SK-N-SH (cell line): ENCODE measurements at regions of chr10 and their contacts with region 1.

Region 1: GRCh38 chr10:72834183-72834825 is 59.2 kb upstream of the OIT3 start:
- DNase-seq: peak; percentile 57
- H3K4me3 ChIP-seq: no peak overlapping the region
- H3K27ac ChIP-seq: no peak overlapping the region
- H3K4me1 ChIP-seq: peaks cover 0 to 7% of the 10 kb centered on the region in 2 experiments; a peak in 2 of 4 replicates
- H3K27me3 ChIP-seq: no peaks in the 10 kb centered on the region
- CTCF ChIP-seq: peak; percentile 83
- EP300 ChIP-seq: no peak
- RAD21 ChIP-seq: peak; percentile 97

Region 2: DNA sequence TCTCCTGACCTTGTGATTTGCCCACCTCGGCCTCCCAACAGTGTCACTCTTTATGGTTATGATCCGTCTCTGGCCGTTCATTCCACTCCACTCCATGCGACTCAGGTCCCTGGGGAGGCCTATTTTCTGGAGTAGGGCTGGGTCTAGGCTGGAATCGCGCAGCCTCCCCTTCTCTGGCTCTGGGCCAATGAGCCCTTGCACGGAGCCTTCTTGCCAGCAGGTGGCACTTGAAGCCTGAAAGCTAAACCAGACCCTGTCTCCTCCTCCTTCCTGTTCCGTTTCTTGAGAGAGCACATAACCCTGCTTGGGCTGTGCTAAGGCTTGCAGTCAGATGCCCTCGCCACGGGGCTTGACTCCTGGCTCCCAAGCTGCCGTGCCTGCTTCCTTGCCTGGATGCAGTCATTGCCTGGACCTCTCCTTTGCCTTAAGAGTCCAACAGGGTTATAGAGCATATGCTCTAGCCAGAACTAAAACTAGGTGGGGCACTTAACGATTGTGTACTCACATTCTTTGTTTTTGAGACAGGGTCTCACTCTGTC is 470.0 kb before region 1 on chr10:
- CTCF ChIA-PET with region 1: interaction called, 90 read pairs
- POLR2A ChIA-PET with region 1: interaction called, 3 read pairs
- DNase-seq: peak; percentile 83
- H3K4me3 ChIP-seq: peak overlapping the region in 1 of 2 experiments; percentile 34; a peak in 1 of 4 replicates
- H3K27ac ChIP-seq: peak overlapping the region; percentile 25 to 62; a peak in 2 of 4 replicates
- H3K4me1 ChIP-seq: peaks cover 2 to 12% of the 10 kb centered on the region in 2 experiments; a peak in 1 of 4 replicates
- H3K27me3 ChIP-seq: no peaks in the 10 kb centered on the region
- CTCF ChIP-seq: peak; percentile 93
- EP300 ChIP-seq: no peak
- RAD21 ChIP-seq: peak; percentile 97

Region 3: GRCh38 chr10:72692057-72692910 is 142.0 kb before region 1 on chr10 and contains the start of gene MCU:
- CTCF ChIA-PET with region 1: interaction called, 38 read pairs
- POLR2A ChIA-PET with region 1: interaction called, 5 read pairs
- DNase-seq: peak; percentile 94
- H3K4me3 ChIP-seq: peak within 1 kb of the TSS; percentile 89
- H3K27ac ChIP-seq: peak within 1 kb of the TSS; percentile 20 to 80; a peak in 3 of 4 replicates
- H3K4me1 ChIP-seq: peaks cover 8 to 11% of the 10 kb centered on the region in 2 experiments; a peak in 3 of 4 replicates
- H3K27me3 ChIP-seq: no peaks in the 10 kb centered on the region
- CTCF ChIP-seq: no peak
- EP300 ChIP-seq: no peak
- RAD21 ChIP-seq: no peak
- polyA plus RNA-seq, gene MCU: 20.6 and 30.1 TPM in 2 replicates

Region 4: DNA sequence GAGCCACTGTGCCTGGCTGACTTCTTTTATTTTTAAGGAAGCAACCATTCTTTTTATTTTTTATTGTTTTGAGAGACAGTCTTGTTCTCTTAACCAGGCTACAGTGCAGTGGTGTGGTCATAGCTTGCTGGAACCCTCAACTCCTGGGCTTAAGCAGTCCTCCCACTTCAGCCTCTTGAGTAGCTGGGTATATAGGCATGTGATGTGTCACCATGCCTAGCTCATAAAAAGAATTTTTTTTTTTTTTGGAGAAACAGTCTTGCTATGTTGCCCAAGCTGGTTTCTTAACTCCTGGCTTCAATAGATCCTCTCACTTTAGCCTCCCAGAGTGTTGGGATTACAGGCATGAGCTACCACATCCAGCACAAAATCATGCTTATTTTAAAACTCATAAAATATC is 136.6 kb before region 1 on chr10:
- CTCF ChIA-PET with region 1: interaction called, 38 read pairs
- POLR2A ChIA-PET with region 1: interaction called, 4 read pairs
- DNase-seq: no peak
- H3K4me3 ChIP-seq: no peak overlapping the region
- H3K27ac ChIP-seq: no peak overlapping the region
- H3K4me1 ChIP-seq: peaks cover 8 to 11% of the 10 kb centered on the region in 2 experiments; a peak in 3 of 4 replicates
- H3K27me3 ChIP-seq: no peaks in the 10 kb centered on the region
- CTCF ChIP-seq: no peak
- EP300 ChIP-seq: no peak
- RAD21 ChIP-seq: no peak

Region 5: DNA sequence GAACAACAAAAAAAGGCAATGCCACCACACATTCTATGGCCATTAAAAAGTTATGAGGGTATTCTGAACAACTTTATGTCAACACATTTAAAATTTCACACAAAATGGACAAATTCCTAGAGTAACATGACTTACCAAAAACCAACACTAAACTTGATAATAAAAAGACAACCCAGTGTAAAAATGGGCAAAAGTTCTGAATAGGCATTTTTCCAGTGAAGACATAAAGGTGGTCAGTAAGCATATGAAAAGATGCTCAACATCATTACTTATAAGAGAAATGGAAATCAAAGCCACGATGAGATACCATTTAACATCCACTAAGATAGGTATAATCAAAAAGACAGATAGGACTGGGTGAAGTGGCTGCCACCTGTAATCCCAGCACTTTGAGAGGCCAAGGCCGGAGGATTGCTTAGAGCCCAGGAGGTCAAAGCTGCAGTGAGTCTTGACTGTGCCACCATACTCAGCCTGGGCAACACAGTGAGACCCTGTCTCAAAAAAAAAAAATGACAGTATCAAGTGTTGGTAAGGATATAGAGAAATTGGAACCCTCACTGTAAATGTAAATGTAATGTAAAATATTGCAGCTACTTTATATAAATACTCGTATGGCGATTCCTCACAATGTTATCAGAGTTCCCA is 11.8 kb before region 1 on chr10:
- CTCF ChIA-PET with region 1: interaction called, 10 read pairs
- POLR2A ChIA-PET with region 1: no interaction called
- DNase-seq: no peak
- H3K4me3 ChIP-seq: no peak overlapping the region
- H3K27ac ChIP-seq: no peak overlapping the region
- H3K4me1 ChIP-seq: peaks cover 0 to under 1% of the 10 kb centered on the region in 2 experiments; a peak in 1 of 4 replicates
- H3K27me3 ChIP-seq: no peaks in the 10 kb centered on the region
- CTCF ChIP-seq: no peak
- EP300 ChIP-seq: no peak
- RAD21 ChIP-seq: no peak

Region 6: DNA sequence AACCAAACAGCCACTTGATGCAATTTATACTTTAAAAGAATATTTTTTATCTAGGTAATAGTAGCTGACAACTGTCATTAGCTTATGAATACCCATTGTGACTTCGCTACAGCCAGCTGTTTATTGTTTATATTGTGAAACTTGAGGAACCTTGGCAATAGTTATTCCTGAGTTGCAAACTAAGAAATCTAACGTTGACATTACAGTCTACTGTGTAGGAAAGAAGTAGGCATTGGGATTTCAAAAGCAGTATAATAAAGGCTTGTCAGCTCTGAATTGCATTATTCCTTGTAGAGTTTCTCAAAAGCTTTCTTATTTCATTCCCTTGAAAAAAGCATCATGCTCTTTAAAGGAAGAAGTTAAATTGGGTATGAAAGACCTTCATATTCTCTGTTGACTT is 16.6 kb after region 1 on chr10:
- CTCF ChIA-PET with region 1: interaction called, 11 read pairs
- POLR2A ChIA-PET with region 1: no interaction called
- DNase-seq: no peak
- H3K4me3 ChIP-seq: no peak overlapping the region
- H3K27ac ChIP-seq: no peak overlapping the region
- H3K4me1 ChIP-seq: no peaks in the 10 kb centered on the region
- H3K27me3 ChIP-seq: no peaks in the 10 kb centered on the region
- CTCF ChIP-seq: no peak
- EP300 ChIP-seq: no peak
- RAD21 ChIP-seq: no peak

Region 7: DNA sequence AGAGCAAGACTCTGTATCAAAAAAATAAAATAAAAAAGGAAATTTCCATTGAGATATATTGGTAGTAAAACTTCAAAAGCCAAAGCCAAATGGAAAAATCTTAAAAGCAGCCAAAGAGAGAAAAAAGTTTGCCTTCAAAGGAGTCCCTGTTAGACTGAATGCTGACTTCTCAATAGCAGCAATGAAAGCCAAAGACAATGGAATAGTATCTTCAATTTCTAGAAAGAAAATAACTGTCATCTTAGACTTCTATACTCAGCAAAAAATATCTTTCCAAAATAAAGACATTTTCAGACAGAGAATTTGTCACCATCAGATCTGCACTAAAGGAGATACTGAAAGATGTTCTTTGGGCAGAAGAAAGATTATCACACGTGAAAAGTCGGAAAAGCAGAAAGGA is 44.9 kb after region 1 on chr10:
- CTCF ChIA-PET with region 1: no interaction called
- POLR2A ChIA-PET with region 1: no interaction called
- DNase-seq: no peak
- H3K4me3 ChIP-seq: no peak overlapping the region
- H3K27ac ChIP-seq: no peak overlapping the region
- H3K4me1 ChIP-seq: no peaks in the 10 kb centered on the region
- H3K27me3 ChIP-seq: no peaks in the 10 kb centered on the region
- CTCF ChIP-seq: no peak
- EP300 ChIP-seq: no peak
- RAD21 ChIP-seq: no peak